Stomach (tissue), 19 donors: ENCODE measurements at regions of chr7 and their contacts with region 1.

Region 1: DNA sequence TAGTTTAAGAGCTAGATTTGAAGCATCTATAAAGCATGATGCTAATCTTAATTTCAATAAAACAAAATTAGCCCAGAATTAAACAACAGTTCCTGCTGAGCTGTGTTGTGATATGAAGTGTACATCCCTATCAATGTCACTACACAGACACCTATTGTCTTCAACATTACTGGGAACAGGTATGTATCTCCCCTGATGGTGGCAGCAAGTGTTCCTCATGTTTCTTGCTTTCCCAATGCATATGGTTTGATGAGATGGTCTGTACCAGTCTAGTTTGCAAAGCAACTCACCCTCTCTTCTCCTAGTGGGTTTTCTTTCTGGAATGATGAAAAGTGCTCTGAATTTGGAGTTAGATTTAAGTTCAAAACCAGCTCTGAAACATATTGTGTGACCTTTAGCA is 38.1 kb downstream of the TSPAN12 start:
- DNase-seq: no peak
- H3K4me3 ChIP-seq: no peak overlapping the region
- H3K27ac ChIP-seq: no peak overlapping the region
- H3K4me1 ChIP-seq: peaks cover 0 to 2% (median under 1%) of the 10 kb centered on the region in 4 donors
- H3K27me3 ChIP-seq: no peaks in the 10 kb centered on the region
- CTCF ChIP-seq: no peak
- EP300 ChIP-seq: no peak
- POLR2A ChIP-seq: no peak

Region 2: DNA sequence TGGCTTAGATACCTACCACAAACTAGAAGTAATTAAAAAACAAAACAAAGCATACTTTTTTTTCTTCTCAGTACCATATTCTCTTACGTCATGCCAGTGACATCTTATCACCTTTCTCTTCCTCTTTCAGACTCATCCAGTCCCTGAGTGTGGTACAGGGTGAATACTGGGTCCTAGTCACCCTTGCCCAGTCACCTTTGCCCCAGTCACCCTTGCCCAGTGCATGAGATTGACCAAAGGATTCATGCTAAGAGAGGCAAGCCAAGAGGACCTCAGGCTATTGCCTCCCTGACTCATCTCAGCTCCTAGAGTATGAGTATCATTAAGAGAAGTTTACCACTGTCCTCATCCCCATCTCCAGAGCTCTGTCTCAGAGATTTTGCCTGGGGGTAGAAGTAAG is 48.1 kb after region 1 on chr7:
- intact Hi-C with region 1: loop called (anchors 10 kb)
- DNase-seq: no peak
- H3K4me3 ChIP-seq: no peak overlapping the region
- H3K27ac ChIP-seq: no peak overlapping the region
- H3K4me1 ChIP-seq: no peaks in the 10 kb centered on the region
- H3K27me3 ChIP-seq: no peaks in the 10 kb centered on the region
- CTCF ChIP-seq: no peak
- EP300 ChIP-seq: no peak
- POLR2A ChIP-seq: no peak

Region 3: GRCh38 chr7:120950539-120951308 is 130.9 kb after region 1 on chr7 and contains the start of gene ING3:
- intact Hi-C with region 1: no loop called
- DNase-seq: peak; percentile 97 to 99
- H3K4me3 ChIP-seq: peak within 1 kb of the TSS; percentile 61 to 68 (median 66)
- H3K27ac ChIP-seq: peak within 1 kb of the TSS; percentile 97 to 99 (median 98)
- H3K4me1 ChIP-seq: peaks cover 15 to 43% (median 23%) of the 10 kb centered on the region in 4 donors
- H3K27me3 ChIP-seq: no peaks in the 10 kb centered on the region
- CTCF ChIP-seq: no peak
- EP300 ChIP-seq: no peak
- POLR2A ChIP-seq: no peak
- total RNA-seq, gene ING3: 8.4 to 37.1 (median 26.3) TPM